B cell (primary cell): ENCODE measurements at regions of chr2 and their contacts with region 1.

Region 1: DNA sequence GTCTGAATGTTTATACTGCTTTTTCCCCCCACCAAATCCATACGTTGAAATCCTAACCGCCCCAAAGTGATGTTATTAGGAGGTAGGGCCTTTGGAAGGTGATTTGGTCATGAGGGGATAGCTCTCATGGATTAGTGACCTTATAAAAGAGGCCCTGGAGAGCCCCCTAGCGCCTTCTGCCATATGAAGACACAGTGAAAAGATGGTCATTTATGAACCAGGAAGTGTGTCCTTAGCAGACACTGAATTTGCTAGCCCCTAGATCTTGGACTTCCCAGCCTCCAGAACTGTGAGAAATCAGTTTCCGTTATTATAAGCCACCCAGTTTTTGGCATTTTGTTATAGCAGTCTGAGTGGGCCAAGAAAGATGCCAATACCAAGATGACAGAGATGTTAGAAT is 7.2 kb upstream of the TSN start:
- DNase-seq: no peak
- ATAC-seq: no peak
- H3K4me3 ChIP-seq: no peak overlapping the region
- H3K4me3 Mint-ChIP-seq: no peak overlapping the region
- H3K27ac ChIP-seq: no peak overlapping the region
- H3K27ac Mint-ChIP-seq: no peak overlapping the region
- H3K4me1 ChIP-seq: no peaks in the 10 kb centered on the region
- H3K4me1 Mint-ChIP-seq: no peaks in the 10 kb centered on the region
- H3K27me3 ChIP-seq: no peaks in the 10 kb centered on the region
- H3K27me3 Mint-ChIP-seq: no peaks in the 10 kb centered on the region
- CTCF ChIP-seq: no peak

Region 2: GRCh38 chr2:121333834-121334558 is 414.2 kb before region 1 on chr2:
- CTCF ChIA-PET with region 1: no interaction called
- POLR2A ChIA-PET with region 1: no interaction called
- intact Hi-C with region 1: no loop called
- DNase-seq: no peak
- ATAC-seq: no peak
- H3K4me3 ChIP-seq: no peak overlapping the region
- H3K4me3 Mint-ChIP-seq: no peak overlapping the region
- H3K27ac ChIP-seq: no peak overlapping the region
- H3K27ac Mint-ChIP-seq: no peak overlapping the region
- H3K4me1 ChIP-seq: no peaks in the 10 kb centered on the region
- H3K4me1 Mint-ChIP-seq: no peaks in the 10 kb centered on the region
- H3K27me3 ChIP-seq: peaks cover 0 to 1% (median 0%) of the 10 kb centered on the region in 4 experiments
- H3K27me3 Mint-ChIP-seq: no peaks in the 10 kb centered on the region
- CTCF ChIP-seq: no peak

Region 3: DNA sequence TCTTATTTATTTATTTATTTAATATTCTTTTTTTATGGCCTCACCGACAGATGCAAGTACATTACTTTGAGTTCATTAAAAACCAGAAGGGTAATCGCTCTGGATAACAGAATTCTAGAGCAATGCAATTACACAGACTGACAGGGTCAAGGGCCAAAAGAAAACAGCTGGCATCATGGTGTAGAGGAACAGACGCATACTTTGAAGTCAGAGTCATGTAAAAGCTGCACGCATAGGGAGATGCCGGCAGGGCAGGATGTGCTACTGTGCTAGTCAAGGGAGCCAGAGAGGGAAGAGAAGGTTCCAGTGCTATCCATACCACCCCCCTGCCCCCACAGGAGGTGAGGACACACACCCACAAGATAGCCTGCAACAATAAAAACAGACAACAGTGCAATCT is 348.0 kb before region 1 on chr2:
- CTCF ChIA-PET with region 1: interaction called, 4 read pairs
- POLR2A ChIA-PET with region 1: no interaction called
- intact Hi-C with region 1: loop called (anchors 10 kb)
- DNase-seq: no peak
- ATAC-seq: no peak
- H3K4me3 ChIP-seq: no peak overlapping the region
- H3K4me3 Mint-ChIP-seq: no peak overlapping the region
- H3K27ac ChIP-seq: no peak overlapping the region
- H3K27ac Mint-ChIP-seq: no peak overlapping the region
- H3K4me1 ChIP-seq: no peaks in the 10 kb centered on the region
- H3K4me1 Mint-ChIP-seq: no peaks in the 10 kb centered on the region
- H3K27me3 ChIP-seq: no peaks in the 10 kb centered on the region
- H3K27me3 Mint-ChIP-seq: no peaks in the 10 kb centered on the region
- CTCF ChIP-seq: no peak